SK-N-SH (cell line): ENCODE measurements at regions of chr12 and their contacts with region 1.

Region 1: DNA sequence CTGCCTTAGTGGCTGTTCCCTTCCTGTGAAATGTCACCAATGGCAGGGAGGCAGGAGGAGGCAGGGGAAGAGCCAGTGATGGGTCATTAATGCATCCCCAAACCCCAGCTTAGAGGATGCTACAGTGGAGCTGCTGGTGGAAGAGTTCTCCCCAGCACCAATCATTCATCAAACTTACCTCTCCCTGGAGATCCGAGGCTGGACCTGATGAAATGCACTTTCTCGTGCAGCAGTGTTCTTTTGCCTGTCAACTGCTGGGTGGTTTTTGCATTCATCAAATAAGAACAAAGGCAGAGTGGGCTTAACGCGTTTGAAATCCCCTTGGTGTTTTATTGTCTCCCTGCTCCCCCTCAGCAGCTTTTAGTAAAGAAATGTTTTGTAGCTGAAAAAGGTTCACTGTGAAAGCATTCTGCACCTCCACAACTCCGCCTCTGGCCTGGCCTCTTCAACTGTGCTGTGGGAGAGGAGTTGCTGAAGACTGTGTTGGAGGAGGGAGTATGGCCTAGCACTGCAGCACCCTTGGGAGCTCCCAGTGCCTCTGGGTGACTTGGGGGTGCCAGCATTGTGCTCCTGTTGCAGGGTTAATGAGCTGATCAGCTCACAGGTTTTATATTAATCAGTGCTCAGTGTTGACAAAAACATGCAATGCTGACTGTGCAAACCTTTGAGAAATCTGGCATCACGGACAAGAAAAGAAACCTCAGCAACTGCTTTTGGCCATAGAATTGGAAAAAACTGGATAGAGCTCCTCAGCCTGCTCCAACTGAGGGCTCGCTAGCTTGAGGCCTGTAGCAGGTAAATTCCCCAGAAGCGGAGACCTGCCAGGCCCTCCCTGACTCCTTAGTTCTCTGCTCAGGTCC is 14.4 kb downstream of the TSPAN9 start:
- DNase-seq: no peak
- H3K4me3 ChIP-seq: no peak overlapping the region
- H3K27ac ChIP-seq: no peak overlapping the region
- H3K4me1 ChIP-seq: peaks cover 0 to 6% of the 10 kb centered on the region in 2 experiments; a peak in 1 of 4 replicates
- H3K27me3 ChIP-seq: no peaks in the 10 kb centered on the region
- CTCF ChIP-seq: no peak
- EP300 ChIP-seq: no peak
- RAD21 ChIP-seq: no peak

Region 2: DNA sequence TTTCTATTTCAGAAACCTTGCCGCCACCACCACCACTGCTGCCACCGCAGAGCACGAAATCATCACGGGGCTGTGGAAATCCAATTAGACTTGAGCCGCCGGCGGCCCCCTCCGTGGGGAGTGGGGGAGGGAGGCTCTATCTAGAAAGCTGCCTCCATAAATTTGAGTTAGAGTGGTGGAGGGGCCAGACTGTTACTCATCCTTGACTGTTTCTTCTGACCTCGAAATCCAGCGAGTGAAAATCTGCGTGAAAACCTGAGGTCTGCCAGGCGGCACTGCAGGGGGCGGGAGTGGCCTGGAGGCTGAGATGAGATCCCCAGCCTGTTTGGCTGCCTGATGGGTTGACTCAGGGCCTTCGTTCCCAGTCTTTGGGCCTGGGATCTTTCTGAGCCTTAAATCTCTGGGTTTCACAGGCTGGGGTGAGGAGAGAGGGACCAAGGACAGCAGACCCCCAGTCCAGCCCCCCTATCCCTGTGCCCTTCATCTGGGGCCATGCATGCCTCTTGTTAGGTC is 15.5 kb after region 1 on chr12:
- CTCF ChIA-PET with region 1: interaction called, 11 read pairs
- POLR2A ChIA-PET with region 1: no interaction called
- DNase-seq: peak; percentile 65
- H3K4me3 ChIP-seq: no peak overlapping the region
- H3K27ac ChIP-seq: peak overlapping the region; percentile 29 to 77
- H3K4me1 ChIP-seq: peaks cover 35 to 48% of the 10 kb centered on the region in 2 experiments; a peak in 3 of 4 replicates
- H3K27me3 ChIP-seq: no peaks in the 10 kb centered on the region
- CTCF ChIP-seq: no peak; the same call in 1 of the 2 replicates
- EP300 ChIP-seq: no peak
- RAD21 ChIP-seq: no peak

Region 3: GRCh38 chr12:3777206-3777809 is 685.7 kb after region 1 on chr12:
- CTCF ChIA-PET with region 1: no interaction called
- POLR2A ChIA-PET with region 1: no interaction called
- DNase-seq: peak; percentile 61
- H3K4me3 ChIP-seq: no peak overlapping the region
- H3K27ac ChIP-seq: no peak overlapping the region
- H3K4me1 ChIP-seq: no peaks in the 10 kb centered on the region
- H3K27me3 ChIP-seq: peaks cover 12% of the 10 kb centered on the region; the same call in 1 of the 2 replicates
- CTCF ChIP-seq: peak; percentile 81
- EP300 ChIP-seq: no peak
- RAD21 ChIP-seq: peak; percentile 85